WTC11 (cell line): ENCODE measurements at regions of chr5 and their contacts with region 1.

Region 1: DNA sequence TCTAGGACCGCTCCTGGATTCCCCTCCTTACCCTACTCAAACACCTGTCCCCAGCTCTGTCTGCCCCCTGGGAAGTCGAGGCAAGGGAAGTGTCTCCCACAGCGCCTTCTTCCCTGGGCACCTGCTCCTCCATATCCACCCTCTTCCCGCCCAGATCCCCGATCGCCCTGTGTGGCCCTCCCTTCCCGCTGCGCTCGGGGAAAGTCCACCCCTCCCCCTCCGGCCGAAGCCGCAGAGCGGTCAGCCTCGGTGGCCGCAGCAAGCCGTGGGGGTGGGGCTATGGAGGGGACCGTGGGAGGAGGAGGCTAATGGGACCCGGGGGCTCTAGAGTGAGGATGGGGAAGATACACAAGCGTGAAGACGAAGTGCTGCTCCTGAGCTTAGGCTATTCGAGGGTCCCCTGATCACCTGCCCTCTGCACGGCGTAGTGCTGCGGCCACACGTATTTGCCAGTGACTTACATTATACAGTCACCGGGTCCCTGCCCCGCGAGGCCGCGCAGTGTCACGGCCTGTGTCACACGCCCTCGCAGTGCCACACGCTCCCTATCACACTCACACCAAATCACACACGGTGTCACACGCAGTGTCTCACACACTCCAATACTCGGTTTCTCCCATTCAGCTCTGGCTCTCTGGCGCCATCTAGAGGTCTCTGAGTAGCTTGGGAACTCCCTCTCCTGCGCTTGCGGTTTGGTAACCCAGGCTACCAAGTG is 658 bp upstream of the PCDH1 start:
- DNase-seq: peak; percentile 90
- ATAC-seq: peak; percentile 30
- H3K4me3 Mint-ChIP-seq: peak overlapping the region; percentile 84
- H3K27ac Mint-ChIP-seq: peak overlapping the region; percentile 98
- H3K4me1 Mint-ChIP-seq: peaks cover 65% of the 10 kb centered on the region
- H3K27me3 Mint-ChIP-seq: peaks cover 6% of the 10 kb centered on the region; the same call in 1 of the 2 replicates
- CTCF ChIP-seq: peak; percentile 93

Region 2: GRCh38 chr5:141681695-141682641 is 196.9 kb before region 1 on chr5 and contains the start of gene ARAP3:
- CTCF ChIA-PET with region 1: interaction called, 12 read pairs
- POLR2A ChIA-PET with region 1: no interaction called
- DNase-seq: peak; percentile 76
- ATAC-seq: peak; percentile 50
- H3K4me3 Mint-ChIP-seq: peak within 1 kb of the TSS; percentile 84
- H3K27ac Mint-ChIP-seq: peak within 1 kb of the TSS; percentile 96
- H3K4me1 Mint-ChIP-seq: peaks cover 50% of the 10 kb centered on the region
- H3K27me3 Mint-ChIP-seq: no peaks in the 10 kb centered on the region
- CTCF ChIP-seq: no peak
- total RNA-seq, gene ARAP3: 51.2 to 60.4 TPM (median 53.4 TPM) in 3 replicates

Region 3: GRCh38 chr5:141757402-141757801 is 121.5 kb before region 1 on chr5:
- CTCF ChIA-PET with region 1: interaction called, 102 read pairs
- POLR2A ChIA-PET with region 1: interaction called, 4 read pairs
- DNase-seq: peak; percentile 70
- ATAC-seq: peak; percentile 62
- H3K4me3 Mint-ChIP-seq: peak overlapping the region; percentile 24; the same call in 1 of the 2 replicates
- H3K27ac Mint-ChIP-seq: no peak overlapping the region
- H3K4me1 Mint-ChIP-seq: peaks cover 49% of the 10 kb centered on the region
- H3K27me3 Mint-ChIP-seq: peaks cover 21% of the 10 kb centered on the region
- CTCF ChIP-seq: 0 out of 2 replicates have a peak, but pooled peaks have one; percentile 13

Region 4: DNA sequence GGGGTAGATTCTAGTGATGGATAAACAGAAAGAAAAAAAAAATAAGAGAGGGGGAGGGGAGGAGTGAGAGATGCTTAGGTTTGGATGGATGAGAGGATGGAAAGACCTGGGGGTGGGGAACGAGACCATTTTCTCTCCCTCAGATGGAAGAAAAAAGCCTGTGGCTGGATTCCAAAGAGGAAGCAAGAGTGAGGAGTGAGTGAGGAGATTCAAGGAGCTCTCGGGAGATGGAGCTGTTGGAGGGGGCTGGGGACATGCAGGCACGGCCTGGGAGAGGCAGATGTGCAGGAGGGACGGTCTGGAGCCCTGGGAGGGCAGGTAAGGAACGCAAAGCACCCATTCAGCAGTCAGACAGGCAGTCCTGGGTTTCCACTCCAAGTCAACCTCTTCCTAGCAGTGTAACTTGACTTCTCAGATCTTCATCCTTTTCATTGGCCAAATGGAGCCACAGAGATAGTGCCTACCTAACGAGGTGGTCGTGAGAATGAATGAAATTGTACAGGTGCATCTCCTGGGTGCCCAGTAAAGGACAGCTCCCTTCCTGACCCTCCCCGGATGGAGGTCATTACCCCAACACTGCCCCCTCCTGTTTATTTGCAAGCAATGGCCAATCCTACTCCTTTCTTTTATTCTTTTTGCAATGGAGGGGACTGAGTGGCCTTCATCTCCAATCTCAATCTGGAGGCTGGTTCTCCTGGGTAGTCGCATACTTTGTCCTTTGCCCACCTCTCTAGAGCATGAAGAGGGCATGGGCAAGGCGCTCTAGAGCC is 52.9 kb before region 1 on chr5:
- CTCF ChIA-PET with region 1: interaction called, 406 read pairs
- POLR2A ChIA-PET with region 1: interaction called, 17 read pairs
- DNase-seq: no peak
- ATAC-seq: peak; percentile 69
- H3K4me3 Mint-ChIP-seq: no peak overlapping the region
- H3K27ac Mint-ChIP-seq: 0 out of 2 replicates have a peak overlapping the region, but pooled peaks have one; percentile 28
- H3K4me1 Mint-ChIP-seq: peaks cover 62% of the 10 kb centered on the region
- H3K27me3 Mint-ChIP-seq: no peaks in the 10 kb centered on the region
- CTCF ChIP-seq: peak; percentile 37

Region 5: GRCh38 chr5:141855265-141856036 is 23.4 kb before region 1 on chr5:
- CTCF ChIA-PET with region 1: interaction called, 97 read pairs
- POLR2A ChIA-PET with region 1: interaction called, 42 read pairs
- DNase-seq: no peak
- ATAC-seq: no peak
- H3K4me3 Mint-ChIP-seq: no peak overlapping the region
- H3K27ac Mint-ChIP-seq: peak overlapping the region; percentile 91
- H3K4me1 Mint-ChIP-seq: peaks cover 73% of the 10 kb centered on the region
- H3K27me3 Mint-ChIP-seq: no peaks in the 10 kb centered on the region
- CTCF ChIP-seq: no peak

Region 6: DNA sequence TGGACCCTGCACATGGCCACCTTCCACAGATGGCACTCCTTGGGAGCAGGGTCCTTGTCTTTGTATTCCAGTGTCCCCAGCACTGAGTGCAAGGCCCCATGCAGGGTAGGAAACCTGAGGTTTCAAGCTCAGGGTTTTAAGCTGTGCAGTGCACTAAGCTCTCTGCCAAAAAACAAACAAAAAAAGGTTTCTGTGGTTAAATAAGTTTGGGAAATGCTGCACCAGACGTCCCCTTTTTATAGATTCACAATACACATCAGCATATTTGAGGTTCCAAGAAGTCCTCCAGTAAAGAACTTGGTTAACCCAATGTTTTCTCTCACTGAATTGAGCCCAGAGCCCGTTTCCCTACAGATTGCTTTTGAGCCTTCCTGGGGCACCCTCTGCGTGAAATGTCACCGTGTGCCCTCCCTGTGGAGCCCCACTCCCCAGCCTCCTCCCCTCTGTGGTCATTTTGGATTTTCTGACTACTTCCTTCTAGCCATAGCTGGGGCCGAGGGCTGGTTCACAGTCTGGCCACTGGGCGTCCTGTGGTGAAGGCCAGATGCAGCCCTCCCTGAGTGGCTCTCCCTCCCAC is 61.9 kb after region 1 on chr5:
- CTCF ChIA-PET with region 1: interaction called, 12 read pairs
- POLR2A ChIA-PET with region 1: interaction called, 4 read pairs
- DNase-seq: no peak
- ATAC-seq: peak; percentile 24
- H3K4me3 Mint-ChIP-seq: no peak overlapping the region
- H3K27ac Mint-ChIP-seq: peak overlapping the region; percentile 81
- H3K4me1 Mint-ChIP-seq: peaks cover 11% of the 10 kb centered on the region
- H3K27me3 Mint-ChIP-seq: no peaks in the 10 kb centered on the region; the same call in 1 of the 2 replicates
- CTCF ChIP-seq: no peak